ENCODE measurements at regions of chr1 and their contacts with region 1.

Region 1: GRCh38 chr1:22704440-22705067 is 6.1 kb upstream of the EPHB2 start:
- DNase-seq: peak; percentile 81
- CTCF ChIP-seq: peak; percentile 84

Region 2: DNA sequence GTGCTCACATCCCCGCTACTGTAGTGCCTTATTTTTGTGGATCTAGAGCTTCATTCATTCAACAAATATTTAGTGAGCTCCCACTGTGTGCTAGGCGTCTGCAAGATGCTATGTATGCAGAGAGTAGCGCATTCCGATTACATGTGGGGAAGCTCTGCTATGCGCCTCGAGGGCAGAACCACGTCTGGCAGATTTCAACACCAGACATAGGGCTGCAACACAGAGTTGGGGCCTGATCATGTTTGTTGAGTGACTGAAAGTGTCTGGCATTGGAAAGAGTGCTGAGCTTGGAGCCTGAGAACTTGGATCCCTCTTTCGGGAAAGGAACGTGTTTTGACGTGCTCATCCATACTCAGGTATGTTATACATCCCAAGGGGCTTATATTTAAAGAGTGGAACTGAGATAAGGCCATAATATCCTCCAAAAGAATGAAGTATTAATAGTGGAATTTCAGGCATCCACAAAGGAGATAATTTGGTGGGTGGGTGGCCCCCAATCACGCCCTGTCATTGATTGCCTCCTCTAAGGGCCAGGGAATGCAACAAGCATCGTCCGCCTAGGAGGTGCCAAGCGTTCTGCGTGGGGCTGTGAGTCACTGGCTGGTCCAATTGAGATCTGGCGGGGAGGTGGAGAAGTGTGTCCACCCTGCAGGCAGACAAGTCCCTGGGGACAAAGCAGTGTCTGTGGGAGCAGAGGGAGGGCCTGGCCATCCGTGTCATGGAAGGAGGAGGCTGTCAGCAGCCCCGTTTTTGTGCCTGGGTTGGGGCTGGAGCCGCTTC is 315.7 kb before region 1 on chr1:
- in situ Hi-C with region 1: no loop called
- DNase-seq: no peak
- CTCF ChIP-seq: no peak

Region 3: DNA sequence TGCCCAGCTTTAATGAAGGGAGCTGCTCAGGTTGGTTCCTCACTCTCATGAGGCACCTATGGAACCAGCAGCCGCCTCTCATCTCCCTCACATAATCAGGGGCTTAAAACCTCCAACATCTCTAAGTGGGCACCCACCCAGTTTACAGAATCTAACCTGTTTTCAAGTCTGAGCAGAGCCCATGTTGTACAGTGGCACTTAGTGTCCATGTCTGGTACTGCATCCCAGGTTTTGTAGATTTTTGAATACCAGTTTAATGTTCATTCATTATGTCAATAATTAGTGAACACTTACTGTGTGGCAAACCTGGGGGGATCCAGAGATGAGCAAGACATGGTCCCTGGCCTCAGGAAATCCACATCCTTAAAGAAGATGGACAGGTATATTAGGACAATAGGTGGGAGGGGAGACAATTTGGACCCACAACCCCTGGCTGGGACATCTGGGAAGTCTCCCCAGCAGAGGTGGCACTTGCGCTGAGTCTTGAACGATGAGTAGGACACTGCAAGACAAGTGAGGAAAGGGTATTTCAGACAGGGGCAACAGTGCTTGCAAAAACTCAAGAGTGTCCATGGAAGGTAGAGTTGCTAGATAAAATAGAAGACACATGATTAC is 184.8 kb after region 1 on chr1:
- in situ Hi-C with region 1: loop called (anchors 25 kb)
- DNase-seq: peak; percentile 73
- CTCF ChIP-seq: peak; percentile 65

Measured in GM13977 (cell line).